Prostate gland (tissue), 2 donors: ENCODE measurements at regions of chr16 and their contacts with region 1.

Region 1: GRCh38 chr16:11851294-11852091 is at the start of gene RSL1D1:
- DNase-seq: peak; percentile 86
- H3K4me3 ChIP-seq: peak within 1 kb of the TSS; percentile 88 to 94
- H3K27ac ChIP-seq: peak within 1 kb of the TSS; percentile 80 to 84
- H3K4me1 ChIP-seq: peaks cover 4% of the 10 kb centered on the region
- H3K27me3 ChIP-seq: no peaks in the 10 kb centered on the region
- CTCF ChIP-seq: peak in 1 of 4 experiments; percentile 10
- POLR2A ChIP-seq: peak; percentile 88
- total RNA-seq, gene RSL1D1: 100 to 132 TPM

Region 2: GRCh38 chr16:11636172-11636721 is 215.2 kb before region 1 on chr16:
- intact Hi-C with region 1: no loop called
- DNase-seq: peak; percentile 93
- H3K4me3 ChIP-seq: peak overlapping the region in 1 of 2 donors; percentile 27
- H3K27ac ChIP-seq: peak overlapping the region; percentile 63 to 64
- H3K4me1 ChIP-seq: no peaks in the 10 kb centered on the region
- H3K27me3 ChIP-seq: no peaks in the 10 kb centered on the region
- CTCF ChIP-seq: peak in 1 of 4 experiments; percentile 12
- POLR2A ChIP-seq: peak; percentile 92

Region 3: GRCh38 chr16:11649276-11649675 is 202.2 kb before region 1 on chr16:
- intact Hi-C with region 1: no loop called
- DNase-seq: no peak
- H3K4me3 ChIP-seq: no peak overlapping the region
- H3K27ac ChIP-seq: no peak overlapping the region
- H3K4me1 ChIP-seq: no peaks in the 10 kb centered on the region
- H3K27me3 ChIP-seq: no peaks in the 10 kb centered on the region
- CTCF ChIP-seq: no peak
- POLR2A ChIP-seq: no peak

Region 4: GRCh38 chr16:11915644-11916523 is 64.4 kb after region 1 on chr16 and contains the start of gene GSPT1:
- intact Hi-C with region 1: loop called (anchors 5 kb)
- DNase-seq: peak; percentile 98
- H3K4me3 ChIP-seq: peak within 1 kb of the TSS; percentile 90 to 94
- H3K27ac ChIP-seq: peak within 1 kb of the TSS; percentile 90 to 97
- H3K4me1 ChIP-seq: peaks cover 2% of the 10 kb centered on the region
- H3K27me3 ChIP-seq: no peaks in the 10 kb centered on the region
- CTCF ChIP-seq: peak in 2 of 4 experiments; percentile 60 to 67
- POLR2A ChIP-seq: peak; percentile 93
- total RNA-seq, gene GSPT1: 70.2 to 88.7 TPM

Region 5: DNA sequence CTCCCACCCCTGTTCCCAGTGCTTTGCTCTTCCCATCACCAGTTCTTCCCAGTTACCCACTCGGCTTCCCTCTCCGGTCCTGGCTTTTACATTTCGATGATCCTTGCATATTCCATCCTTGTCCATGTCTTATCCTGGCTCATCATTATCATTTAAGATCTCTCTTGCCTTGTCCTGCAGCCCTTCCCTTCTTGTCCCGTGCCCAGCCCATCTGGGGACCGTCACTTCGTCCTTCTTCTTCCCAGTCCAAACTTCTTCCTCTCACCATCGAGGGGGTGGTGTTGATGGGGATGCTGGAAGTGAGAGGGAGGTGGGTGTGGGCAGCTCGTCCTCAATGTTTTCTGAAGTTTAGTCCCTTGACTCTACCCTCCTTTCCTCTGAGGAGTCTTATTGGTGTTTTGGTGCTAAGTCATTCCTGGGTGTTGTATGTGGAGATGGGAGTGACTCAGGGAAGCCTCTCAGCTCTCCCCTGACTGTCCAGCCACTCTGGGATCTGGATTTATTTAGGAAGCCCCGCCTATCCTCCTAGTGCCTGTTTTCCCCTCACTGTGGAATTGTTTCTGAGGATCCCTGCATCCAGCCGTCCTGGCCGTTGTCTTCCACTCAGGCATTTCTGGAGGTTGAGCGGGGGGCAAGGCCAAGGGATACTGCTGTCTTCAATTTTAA is 126.0 kb after region 1 on chr16:
- intact Hi-C with region 1: loop called (anchors 10 kb)
- DNase-seq: no peak
- H3K4me3 ChIP-seq: peak overlapping the region; percentile 70 to 85
- H3K27ac ChIP-seq: peak overlapping the region; percentile 50 to 64
- H3K4me1 ChIP-seq: peaks cover 6% of the 10 kb centered on the region
- H3K27me3 ChIP-seq: no peaks in the 10 kb centered on the region
- CTCF ChIP-seq: no peak
- POLR2A ChIP-seq: no peak

Region 6: GRCh38 chr16:12703935-12704334 is 852.4 kb after region 1 on chr16:
- intact Hi-C with region 1: no loop called
- DNase-seq: no peak
- H3K4me3 ChIP-seq: no peak overlapping the region
- H3K27ac ChIP-seq: no peak overlapping the region
- H3K4me1 ChIP-seq: no peaks in the 10 kb centered on the region
- H3K27me3 ChIP-seq: no peaks in the 10 kb centered on the region
- CTCF ChIP-seq: no peak
- POLR2A ChIP-seq: no peak